Mammary epithelial cell (primary cell): ENCODE measurements at regions of chr1 and their contacts with region 1.

Region 1: GRCh38 chr1:176374967-176375569 is 87.9 kb upstream of the PAPPA2 start:
- DNase-seq: peak; percentile 46
- H3K4me3 ChIP-seq: no peak overlapping the region
- H3K27ac ChIP-seq: no peak overlapping the region
- H3K4me1 ChIP-seq: no peaks in the 10 kb centered on the region
- H3K27me3 ChIP-seq: no peaks in the 10 kb centered on the region
- CTCF ChIP-seq: peak; percentile 87 to 91

Region 2: GRCh38 chr1:176364236-176364905 is 10.7 kb before region 1 on chr1:
- CTCF ChIA-PET with region 1: no interaction called
- dilution Hi-C with region 1: no loop called
- in situ Hi-C with region 1: no loop called
- intact Hi-C with region 1: no loop called
- DNase-seq: no peak
- H3K4me3 ChIP-seq: no peak overlapping the region
- H3K27ac ChIP-seq: no peak overlapping the region
- H3K4me1 ChIP-seq: no peaks in the 10 kb centered on the region
- H3K27me3 ChIP-seq: no peaks in the 10 kb centered on the region
- CTCF ChIP-seq: no peak

Region 3: GRCh38 chr1:176466514-176467220 is 91.6 kb after region 1 on chr1:
- CTCF ChIA-PET with region 1: no interaction called
- dilution Hi-C with region 1: no loop called
- in situ Hi-C with region 1: no loop called
- intact Hi-C with region 1: loop called (anchors 1 kb)
- DNase-seq: peak; percentile 30
- H3K4me3 ChIP-seq: no peak overlapping the region
- H3K27ac ChIP-seq: no peak overlapping the region
- H3K4me1 ChIP-seq: no peaks in the 10 kb centered on the region
- H3K27me3 ChIP-seq: no peaks in the 10 kb centered on the region
- CTCF ChIP-seq: peak; percentile 39 to 43

Region 4: DNA sequence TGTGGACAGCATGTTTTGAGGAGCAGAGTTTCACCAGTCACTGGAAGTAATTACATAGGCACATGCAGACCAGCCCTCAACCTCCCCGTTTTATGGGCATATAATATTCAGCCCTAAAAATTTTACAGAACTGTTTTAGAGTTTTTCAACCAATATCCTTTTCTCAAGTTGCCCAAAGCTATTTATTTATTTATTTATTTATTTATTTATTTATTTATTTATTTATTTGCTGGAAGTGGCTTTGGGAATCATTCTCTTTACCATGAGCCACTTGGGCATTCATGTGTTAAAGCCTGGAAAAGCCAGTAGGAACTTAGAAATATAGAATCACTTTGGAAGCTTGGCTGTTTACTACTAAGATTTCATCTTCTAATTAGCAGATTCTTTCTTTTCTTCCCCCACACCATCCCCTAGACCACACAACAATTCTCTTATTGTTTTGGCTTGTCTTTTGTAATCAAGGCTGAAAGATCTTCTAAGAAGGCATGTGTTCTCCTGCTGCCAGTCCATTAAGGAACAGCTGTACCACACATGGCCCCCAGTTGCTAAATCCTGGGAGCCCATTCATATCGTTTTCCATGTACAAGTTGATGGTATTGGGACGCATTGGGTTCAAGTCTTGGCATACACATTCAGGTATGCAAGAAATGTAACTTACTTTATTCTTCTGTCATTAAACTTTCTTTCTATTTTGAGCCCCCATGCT is 307.9 kb after region 1 on chr1:
- CTCF ChIA-PET with region 1: no interaction called
- dilution Hi-C with region 1: no loop called
- in situ Hi-C with region 1: loop called (anchors 10 to 25 kb)
- intact Hi-C with region 1: no loop called
- DNase-seq: no peak
- H3K4me3 ChIP-seq: no peak overlapping the region
- H3K27ac ChIP-seq: no peak overlapping the region
- H3K4me1 ChIP-seq: no peaks in the 10 kb centered on the region
- H3K27me3 ChIP-seq: peaks cover 7% of the 10 kb centered on the region
- CTCF ChIP-seq: no peak

Region 5: GRCh38 chr1:176745945-176746344 is 370.9 kb after region 1 on chr1:
- CTCF ChIA-PET with region 1: no interaction called
- dilution Hi-C with region 1: no loop called
- in situ Hi-C with region 1: no loop called
- intact Hi-C with region 1: loop called (anchors 5 kb)
- DNase-seq: peak; percentile 12
- H3K4me3 ChIP-seq: no peak overlapping the region
- H3K27ac ChIP-seq: no peak overlapping the region
- H3K4me1 ChIP-seq: no peaks in the 10 kb centered on the region
- H3K27me3 ChIP-seq: no peaks in the 10 kb centered on the region
- CTCF ChIP-seq: peak; percentile 23 to 52

Region 6: GRCh38 chr1:176880954-176881595 is 506.0 kb after region 1 on chr1:
- CTCF ChIA-PET with region 1: no interaction called
- dilution Hi-C with region 1: no loop called
- in situ Hi-C with region 1: loop called in 1 of 2 experiments (anchors 10 kb)
- intact Hi-C with region 1: loop called (anchors 1 kb)
- DNase-seq: peak; percentile 50
- H3K4me3 ChIP-seq: no peak overlapping the region
- H3K27ac ChIP-seq: no peak overlapping the region
- H3K4me1 ChIP-seq: peaks cover 11% of the 10 kb centered on the region
- H3K27me3 ChIP-seq: no peaks in the 10 kb centered on the region
- CTCF ChIP-seq: peak; percentile 73 to 90